ENCODE measurements at regions of chr15 and their contacts with region 1.

Region 1: GRCh38 chr15:26555898-26556297 is 217.0 kb downstream of the GABRB3 start:
- DNase-seq: no peak
- ATAC-seq: no peak
- H3K4me3 ChIP-seq: no peak overlapping the region
- H3K27ac ChIP-seq: no peak overlapping the region
- H3K4me1 ChIP-seq: no peaks in the 10 kb centered on the region
- H3K27me3 ChIP-seq: no peaks in the 10 kb centered on the region
- CTCF ChIP-seq: no peak

Region 2: DNA sequence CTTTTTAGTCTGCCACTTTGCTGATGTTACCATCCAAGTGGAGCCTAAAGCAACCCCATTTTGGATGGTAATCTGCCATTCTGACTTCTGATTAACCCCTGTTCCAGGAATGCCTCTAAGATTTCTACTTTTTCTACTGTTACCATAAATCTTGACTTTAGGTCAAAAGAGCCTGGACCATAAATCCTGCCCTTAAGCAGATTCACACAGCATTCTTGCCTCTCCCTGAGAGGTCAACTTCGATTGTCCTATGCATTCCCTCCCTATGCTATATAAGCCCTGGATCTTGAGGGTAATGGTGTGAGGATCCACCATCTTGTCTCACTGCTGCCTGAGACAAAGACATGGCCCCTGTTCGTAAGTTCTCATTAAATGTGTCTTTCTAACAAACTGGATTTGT is 39.7 kb after region 1 on chr15:
- intact Hi-C with region 1: loop called in 1 of 2 experiments (anchors 5 kb)
- DNase-seq: no peak
- ATAC-seq: no peak
- H3K4me3 ChIP-seq: no peak overlapping the region
- H3K27ac ChIP-seq: no peak overlapping the region
- H3K4me1 ChIP-seq: no peaks in the 10 kb centered on the region
- H3K27me3 ChIP-seq: no peaks in the 10 kb centered on the region
- CTCF ChIP-seq: no peak